ENCODE measurements at regions of chr10 and their contacts with region 1.

Region 1: DNA sequence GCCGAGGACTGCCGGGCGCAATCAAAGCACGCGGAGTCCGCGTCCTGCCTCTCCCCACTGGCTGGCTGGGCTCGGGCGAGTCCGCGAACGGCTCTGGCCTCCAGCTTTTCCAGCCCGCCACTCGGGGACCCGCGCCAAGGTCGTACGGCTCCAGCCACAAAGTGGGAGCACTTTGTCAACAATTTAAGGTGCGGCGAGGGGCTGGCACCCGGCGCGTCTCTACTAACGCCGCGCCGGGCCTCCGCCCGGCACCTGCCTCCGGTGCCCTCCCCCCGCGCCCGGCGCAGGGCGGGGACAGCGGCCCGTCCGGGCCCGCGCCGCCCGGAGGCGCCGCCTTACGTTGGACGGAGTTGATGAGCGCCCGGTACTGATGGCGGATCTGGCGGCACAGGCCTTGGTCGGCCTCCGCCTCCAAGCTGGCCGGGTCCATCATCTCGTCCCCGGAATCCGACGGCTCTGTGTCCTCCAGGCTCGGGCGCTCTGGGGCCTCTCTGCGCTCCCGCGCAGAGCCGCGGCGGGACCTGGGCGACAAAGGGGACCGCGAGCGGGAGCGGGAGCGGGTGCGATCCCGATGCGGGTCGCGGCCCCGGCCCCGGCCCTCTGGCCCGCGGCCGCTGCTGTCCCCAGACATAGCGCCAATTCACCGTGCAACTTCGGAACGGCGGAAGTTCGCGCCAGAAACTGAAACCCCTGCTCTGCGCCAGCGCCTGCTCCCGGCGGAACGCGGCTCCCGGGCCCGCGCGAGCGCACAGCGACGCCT is at the start of gene NSMCE4A:
- DNase-seq: peak; percentile 36 to 78
- H3K4me3 ChIP-seq: peak within 1 kb of the TSS; percentile 68 to 94 (median 85)
- H3K27ac ChIP-seq: peak within 1 kb of the TSS; percentile 92 to 96
- H3K4me1 ChIP-seq: peaks cover 8 to 13% of the 10 kb centered on the region in 2 donors
- H3K27me3 ChIP-seq: no peaks in the 10 kb centered on the region
- CTCF ChIP-seq: no peak
- POLR2A ChIP-seq: no peak
- total RNA-seq, gene NSMCE4A: 72.2 to 120 (median 119) TPM

Region 2: GRCh38 chr10:121469797-121470606 is 504.7 kb before region 1 on chr10:
- intact Hi-C with region 1: loop called (anchors 5 kb)
- DNase-seq: no peak
- H3K4me3 ChIP-seq: no peak overlapping the region
- H3K27ac ChIP-seq: no peak overlapping the region
- H3K4me1 ChIP-seq: no peaks in the 10 kb centered on the region
- H3K27me3 ChIP-seq: no peaks in the 10 kb centered on the region
- CTCF ChIP-seq: no peak
- POLR2A ChIP-seq: no peak

Region 3: GRCh38 chr10:122019414-122019975 is 44.8 kb after region 1 on chr10:
- intact Hi-C with region 1: no loop called
- DNase-seq: peak; percentile 65 to 67
- H3K4me3 ChIP-seq: peak overlapping the region in 2 of 3 donors; percentile 39 to 55
- H3K27ac ChIP-seq: peak overlapping the region; percentile 80 to 84
- H3K4me1 ChIP-seq: peaks cover 0 to 3% of the 10 kb centered on the region in 2 donors
- H3K27me3 ChIP-seq: no peaks in the 10 kb centered on the region
- CTCF ChIP-seq: no peak
- POLR2A ChIP-seq: no peak

Measured in breast epithelium (tissue), 4 donors.